ENCODE measurements at regions of chr3 and their contacts with region 1.

Region 1: GRCh38 chr3:44077246-44077645 is 164.4 kb upstream of the TOPAZ1 start:
- DNase-seq: no peak
- ATAC-seq: peak; percentile 59
- H3K4me3 Mint-ChIP-seq: no peak overlapping the region
- H3K27ac Mint-ChIP-seq: no peak overlapping the region; the same call in 1 of the 2 replicates
- H3K4me1 Mint-ChIP-seq: peaks cover 43% of the 10 kb centered on the region
- H3K27me3 Mint-ChIP-seq: no peaks in the 10 kb centered on the region; the same call in 1 of the 2 replicates
- CTCF ChIP-seq: no peak

Region 2: DNA sequence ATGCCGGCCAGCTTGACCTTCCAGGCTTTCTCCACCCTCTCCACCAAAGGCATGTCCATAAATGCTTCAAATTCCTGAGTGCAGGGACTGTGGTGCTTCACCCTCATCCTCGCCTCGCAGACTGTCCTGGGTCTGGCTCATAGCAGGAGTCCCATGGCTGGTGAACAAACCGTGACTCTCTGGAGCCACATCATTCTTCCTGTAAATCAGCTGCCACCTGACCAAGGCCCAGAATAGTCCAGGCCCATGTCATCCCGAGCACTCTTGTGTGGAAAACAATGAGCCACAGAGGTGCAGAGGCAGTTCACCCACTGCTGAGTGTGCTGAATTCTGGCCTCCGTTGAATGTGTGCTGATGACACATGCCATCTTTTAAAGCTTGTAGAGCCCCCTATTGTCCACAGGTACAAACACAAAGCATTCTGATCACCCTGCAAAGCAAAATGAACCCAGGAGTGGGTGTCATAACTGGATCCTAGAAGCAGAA is 317.9 kb before region 1 on chr3:
- CTCF ChIA-PET with region 1: no interaction called
- POLR2A ChIA-PET with region 1: no interaction called
- DNase-seq: peak; percentile 15
- ATAC-seq: peak; percentile 77
- H3K4me3 Mint-ChIP-seq: no peak overlapping the region
- H3K27ac Mint-ChIP-seq: no peak overlapping the region
- H3K4me1 Mint-ChIP-seq: peaks cover 31% of the 10 kb centered on the region
- H3K27me3 Mint-ChIP-seq: no peaks in the 10 kb centered on the region; the same call in 1 of the 2 replicates
- CTCF ChIP-seq: no peak

Region 3: GRCh38 chr3:44098656-44099415 is 21.6 kb after region 1 on chr3:
- CTCF ChIA-PET with region 1: interaction called, 10 read pairs
- POLR2A ChIA-PET with region 1: interaction called, 3 read pairs
- DNase-seq: no peak
- ATAC-seq: peak; percentile 53; the same call in 1 of the 2 replicates
- H3K4me3 Mint-ChIP-seq: no peak overlapping the region
- H3K27ac Mint-ChIP-seq: no peak overlapping the region
- H3K4me1 Mint-ChIP-seq: peaks cover 22% of the 10 kb centered on the region
- H3K27me3 Mint-ChIP-seq: no peaks in the 10 kb centered on the region; the same call in none of the 2 replicates
- CTCF ChIP-seq: no peak

Region 4: DNA sequence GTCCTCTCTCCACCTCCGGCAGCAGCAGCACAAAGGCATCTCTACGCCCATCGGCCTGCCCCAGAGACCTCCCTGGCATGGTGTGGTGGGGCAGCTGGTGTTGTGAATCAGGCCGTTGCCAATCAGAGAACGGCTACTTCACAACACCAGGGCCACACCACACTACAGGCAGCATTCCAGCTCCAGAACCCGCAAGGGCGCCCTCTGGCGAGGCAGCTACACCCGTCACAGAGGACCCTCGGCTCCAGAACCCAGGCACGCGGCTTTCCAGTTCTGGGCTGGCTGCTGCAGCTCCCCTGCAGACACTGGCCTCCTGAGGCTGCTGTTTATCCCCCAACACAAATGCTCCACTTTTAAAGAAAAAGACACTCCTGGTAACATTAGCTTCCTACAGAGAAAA is 36.9 kb after region 1 on chr3:
- CTCF ChIA-PET with region 1: interaction called, 12 read pairs
- POLR2A ChIA-PET with region 1: no interaction called
- DNase-seq: peak; percentile 86
- ATAC-seq: peak; percentile 94
- H3K4me3 Mint-ChIP-seq: no peak overlapping the region
- H3K27ac Mint-ChIP-seq: no peak overlapping the region
- H3K4me1 Mint-ChIP-seq: peaks cover 11% of the 10 kb centered on the region
- H3K27me3 Mint-ChIP-seq: peaks cover 7% of the 10 kb centered on the region
- CTCF ChIP-seq: peak; percentile 64

Region 5: GRCh38 chr3:44411031-44411645 is 333.9 kb after region 1 on chr3:
- CTCF ChIA-PET with region 1: no interaction called
- POLR2A ChIA-PET with region 1: no interaction called
- DNase-seq: no peak
- ATAC-seq: no peak
- H3K4me3 Mint-ChIP-seq: no peak overlapping the region
- H3K27ac Mint-ChIP-seq: no peak overlapping the region
- H3K4me1 Mint-ChIP-seq: peaks cover 6% of the 10 kb centered on the region
- H3K27me3 Mint-ChIP-seq: no peaks in the 10 kb centered on the region
- CTCF ChIP-seq: no peak

Measured in WTC11 (cell line).